ENCODE measurements at regions of chr19 and their contacts with region 1.

Region 1: GRCh38 chr19:38862321-38863059 is 12.7 kb upstream of the HNRNPL start:
- DNase-seq: no peak

Region 2: DNA sequence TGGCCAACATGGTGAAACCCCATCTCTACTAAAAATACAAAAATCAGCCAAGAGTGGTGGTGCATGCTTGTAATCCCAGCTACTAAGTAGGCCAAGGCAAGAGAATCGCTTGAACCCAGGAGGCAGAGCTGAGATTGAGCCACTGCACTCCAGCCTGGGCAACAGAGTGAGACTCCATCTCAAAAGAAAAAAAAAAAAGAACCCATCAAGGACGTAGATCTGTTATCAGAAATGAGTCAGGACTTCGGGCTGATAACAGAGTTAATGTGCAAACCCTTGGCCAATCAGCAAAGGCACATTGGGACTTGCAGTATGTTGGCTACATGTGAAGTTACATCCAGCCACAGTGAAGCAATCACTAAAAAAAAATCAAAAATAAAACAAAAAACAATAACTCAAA is 78.3 kb before region 1 on chr19:
- CTCF ChIA-PET with region 1: no interaction called
- POLR2A ChIA-PET with region 1: no interaction called
- DNase-seq: no peak

Region 3: GRCh38 chr19:38849860-38850435 is 12.5 kb before region 1 on chr19 and contains the start of gene HNRNPL:
- CTCF ChIA-PET with region 1: no interaction called
- POLR2A ChIA-PET with region 1: interaction called, 14 read pairs
- DNase-seq: peak; percentile 90

Region 4: GRCh38 chr19:38875646-38876395 is 13.3 kb after region 1 on chr19:
- CTCF ChIA-PET with region 1: interaction called, 13 read pairs
- POLR2A ChIA-PET with region 1: interaction called, 3 read pairs
- DNase-seq: no peak

Region 5: GRCh38 chr19:38891771-38892170 is 29.3 kb after region 1 on chr19:
- CTCF ChIA-PET with region 1: interaction called, 11 read pairs
- POLR2A ChIA-PET with region 1: no interaction called
- DNase-seq: no peak

Measured in HEK293T (cell line).